Mammary epithelial cell (primary cell): ENCODE measurements at regions of chr11 and their contacts with region 1.

Region 1: GRCh38 chr11:3914805-3915204 is 59.3 kb downstream of the STIM1 start:
- DNase-seq: peak; percentile 21
- H3K4me3 ChIP-seq: no peak overlapping the region
- H3K27ac ChIP-seq: no peak overlapping the region
- H3K4me1 ChIP-seq: peaks cover 13% of the 10 kb centered on the region
- H3K27me3 ChIP-seq: no peaks in the 10 kb centered on the region
- CTCF ChIP-seq: no peak

Region 2: GRCh38 chr11:3841426-3842350 is 73.1 kb before region 1 on chr11:
- CTCF ChIA-PET with region 1: no interaction called
- dilution Hi-C with region 1: loop called (anchors 5 kb)
- in situ Hi-C with region 1: no loop called
- intact Hi-C with region 1: no loop called
- DNase-seq: no peak
- H3K4me3 ChIP-seq: peak overlapping the region; percentile 44 to 78 (median 71)
- H3K27ac ChIP-seq: peak overlapping the region; percentile 67
- H3K4me1 ChIP-seq: peaks cover 27% of the 10 kb centered on the region
- H3K27me3 ChIP-seq: no peaks in the 10 kb centered on the region
- CTCF ChIP-seq: peak; percentile 51 to 90

Region 3: DNA sequence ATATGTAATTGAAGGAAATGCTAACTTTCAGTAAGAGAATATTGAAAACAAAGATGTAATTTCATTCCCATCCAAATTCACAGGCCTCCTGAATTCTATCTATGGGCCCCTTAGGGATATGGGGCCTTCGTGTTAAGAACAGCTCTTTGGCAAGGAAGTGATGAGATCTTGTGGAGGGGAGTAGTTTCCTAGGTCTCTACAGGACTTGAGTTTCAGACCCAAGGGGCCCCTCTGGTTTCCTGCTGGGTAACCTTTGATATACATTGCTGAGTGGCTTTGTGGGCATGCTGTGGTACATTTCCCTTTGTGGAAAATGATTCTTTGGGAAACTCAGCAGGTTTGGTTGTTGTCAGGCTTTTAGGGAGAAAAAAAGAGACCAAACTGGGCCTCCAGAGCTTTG is 53.1 kb before region 1 on chr11:
- CTCF ChIA-PET with region 1: no interaction called
- dilution Hi-C with region 1: no loop called
- in situ Hi-C with region 1: no loop called
- intact Hi-C with region 1: no loop called
- DNase-seq: no peak
- H3K4me3 ChIP-seq: no peak overlapping the region
- H3K27ac ChIP-seq: no peak overlapping the region
- H3K4me1 ChIP-seq: peaks cover 38% of the 10 kb centered on the region
- H3K27me3 ChIP-seq: no peaks in the 10 kb centered on the region
- CTCF ChIP-seq: no peak

Region 4: DNA sequence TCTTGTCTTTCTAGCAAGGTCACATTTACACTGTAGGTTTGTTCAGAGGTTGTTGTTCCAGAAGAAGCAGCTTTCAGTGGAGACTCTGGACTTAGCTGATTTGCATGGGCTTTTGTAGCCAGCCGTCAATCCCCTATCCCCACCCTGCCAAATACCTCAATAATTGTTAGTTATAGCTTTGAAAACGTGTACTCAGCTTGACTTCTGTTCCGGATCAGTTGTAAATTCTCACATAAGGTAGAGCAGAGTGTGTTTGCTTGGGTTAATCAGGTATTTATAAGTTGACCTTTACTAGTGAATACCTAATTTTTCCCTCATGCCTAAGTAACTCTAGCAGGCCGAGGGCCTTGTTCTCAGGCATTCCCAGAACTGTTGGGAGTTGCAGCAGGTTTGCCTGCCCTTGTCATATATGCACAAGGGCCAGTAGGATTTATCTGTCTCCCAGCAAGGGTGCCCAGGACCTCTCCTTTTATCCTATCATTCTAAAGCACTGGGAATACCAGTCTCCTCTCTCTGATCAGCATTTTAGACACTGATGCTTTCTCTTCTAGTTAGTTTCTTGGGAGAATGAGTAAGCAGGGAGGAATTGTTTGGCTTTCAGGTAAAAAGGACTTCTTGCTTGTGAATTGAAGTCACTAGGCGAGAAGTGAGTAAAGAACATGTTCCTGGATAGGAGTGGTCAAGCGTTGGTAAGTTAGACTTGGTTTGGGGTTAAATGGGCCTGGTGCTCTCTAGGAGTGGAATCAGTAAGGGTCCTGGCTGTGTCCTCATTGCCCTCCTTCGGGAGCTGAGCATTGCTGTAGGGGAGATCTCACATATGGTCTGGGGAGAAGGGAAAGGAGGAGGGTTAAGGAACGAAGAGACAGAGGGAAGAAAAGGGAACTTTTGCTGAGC is 37.2 kb before region 1 on chr11:
- CTCF ChIA-PET with region 1: no interaction called
- dilution Hi-C with region 1: no loop called
- in situ Hi-C with region 1: no loop called
- intact Hi-C with region 1: no loop called
- DNase-seq: peak; percentile 73
- H3K4me3 ChIP-seq: no peak overlapping the region
- H3K27ac ChIP-seq: peak overlapping the region; percentile 12
- H3K4me1 ChIP-seq: peaks cover 25% of the 10 kb centered on the region
- H3K27me3 ChIP-seq: no peaks in the 10 kb centered on the region
- CTCF ChIP-seq: no peak

Region 5: DNA sequence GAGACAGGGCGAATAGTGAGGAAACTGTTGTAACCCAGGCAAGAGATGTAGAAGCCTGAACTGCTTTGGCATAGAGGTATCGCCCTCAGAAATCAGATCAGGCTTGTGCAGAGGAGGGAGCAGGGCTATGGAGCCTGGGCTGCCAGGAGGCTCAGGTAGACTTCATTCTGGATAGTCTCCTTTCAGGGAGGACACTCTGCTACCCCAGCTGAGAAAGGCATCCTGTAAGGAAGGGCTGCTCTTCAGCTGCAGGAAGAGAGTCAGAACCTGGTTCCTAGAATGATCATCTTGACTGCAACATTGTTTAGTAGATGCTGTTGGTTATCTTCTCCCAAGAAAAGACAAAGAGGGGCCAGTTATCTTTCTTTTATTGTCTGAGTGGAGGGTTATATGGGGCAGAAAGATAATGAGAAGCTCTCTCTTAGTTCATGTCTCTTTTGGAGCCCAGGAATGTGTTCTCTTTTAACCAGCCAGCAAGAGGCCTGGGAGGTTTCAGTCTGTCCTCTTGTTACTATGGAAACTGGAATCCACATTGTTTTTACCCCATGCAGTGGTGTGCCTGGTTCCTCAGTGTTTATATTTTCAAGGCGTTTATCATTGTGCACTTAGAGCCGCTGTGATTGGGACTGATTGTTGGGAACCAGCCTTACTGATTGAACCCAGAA is 36.3 kb after region 1 on chr11:
- CTCF ChIA-PET with region 1: no interaction called
- dilution Hi-C with region 1: loop called (anchors 5 kb)
- in situ Hi-C with region 1: no loop called
- intact Hi-C with region 1: no loop called
- DNase-seq: no peak
- H3K4me3 ChIP-seq: no peak overlapping the region
- H3K27ac ChIP-seq: no peak overlapping the region
- H3K4me1 ChIP-seq: peaks cover 37% of the 10 kb centered on the region
- H3K27me3 ChIP-seq: no peaks in the 10 kb centered on the region
- CTCF ChIP-seq: no peak